ENCODE measurements at regions of chr16 and their contacts with region 1.

Region 1: GRCh38 chr16:8850279-8850885 is 18.4 kb downstream of the CARHSP1 start:
- DNase-seq: no peak
- ATAC-seq: peak; percentile 15
- H3K4me3 Mint-ChIP-seq: no peak overlapping the region
- H3K27ac Mint-ChIP-seq: peak overlapping the region; percentile 87
- H3K4me1 Mint-ChIP-seq: peaks cover 24% of the 10 kb centered on the region
- H3K27me3 Mint-ChIP-seq: no peaks in the 10 kb centered on the region
- CTCF ChIP-seq: no peak

Region 2: DNA sequence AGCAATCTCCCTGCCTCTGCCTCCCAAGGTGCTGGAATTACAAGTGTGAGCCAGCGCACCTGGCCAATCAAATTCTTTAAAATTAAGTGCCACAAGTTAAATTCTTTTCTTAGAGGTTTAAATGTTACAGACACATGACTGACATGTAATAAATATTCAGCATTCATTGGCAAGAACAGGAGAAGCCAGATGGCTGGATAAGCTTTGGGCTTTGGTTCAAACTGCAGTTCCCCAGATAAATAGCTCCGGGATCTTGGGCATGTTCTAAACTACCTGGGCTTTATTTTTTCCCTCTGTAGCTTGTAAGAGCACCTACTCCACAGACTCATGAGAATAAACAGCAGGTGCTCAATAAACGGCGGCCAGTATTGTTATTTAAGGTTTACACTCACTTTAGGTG is 141.8 kb before region 1 on chr16:
- CTCF ChIA-PET with region 1: no interaction called
- POLR2A ChIA-PET with region 1: no interaction called
- intact Hi-C with region 1: no loop called
- DNase-seq: no peak
- ATAC-seq: no peak
- H3K4me3 Mint-ChIP-seq: no peak overlapping the region
- H3K27ac Mint-ChIP-seq: no peak overlapping the region
- H3K4me1 Mint-ChIP-seq: no peaks in the 10 kb centered on the region
- H3K27me3 Mint-ChIP-seq: no peaks in the 10 kb centered on the region
- CTCF ChIP-seq: no peak

Region 3: GRCh38 chr16:8818504-8819270 is 31.7 kb before region 1 on chr16:
- CTCF ChIA-PET with region 1: no interaction called
- POLR2A ChIA-PET with region 1: no interaction called
- intact Hi-C with region 1: no loop called
- DNase-seq: no peak
- ATAC-seq: no peak
- H3K4me3 Mint-ChIP-seq: no peak overlapping the region
- H3K27ac Mint-ChIP-seq: peak overlapping the region; percentile 67
- H3K4me1 Mint-ChIP-seq: peaks cover 33% of the 10 kb centered on the region
- H3K27me3 Mint-ChIP-seq: no peaks in the 10 kb centered on the region
- CTCF ChIP-seq: no peak

Region 4: GRCh38 chr16:8868416-8869211 is 18.2 kb after region 1 on chr16 and contains the start of gene CARHSP1:
- CTCF ChIA-PET with region 1: interaction called, 7 read pairs
- POLR2A ChIA-PET with region 1: interaction called, 99 read pairs
- intact Hi-C with region 1: no loop called
- DNase-seq: peak; percentile 87
- ATAC-seq: peak; percentile 79
- H3K4me3 Mint-ChIP-seq: peak within 1 kb of the TSS; percentile 93
- H3K27ac Mint-ChIP-seq: peak within 1 kb of the TSS; percentile 94
- H3K4me1 Mint-ChIP-seq: peaks cover 47% of the 10 kb centered on the region
- H3K27me3 Mint-ChIP-seq: no peaks in the 10 kb centered on the region
- CTCF ChIP-seq: no peak
- total RNA-seq, gene CARHSP1: 63.9 to 72.6 TPM